Heart right ventricle (tissue), 16 donors: ENCODE measurements at regions of chr11 and their contacts with region 1.

Region 1: GRCh38 chr11:125091247-125091876 is 20.1 kb downstream of the TMEM218 start:
- DNase-seq: peak in 1 of 2 donors; percentile 42
- ATAC-seq: peak; percentile 77 to 93 (median 86)
- H3K4me3 ChIP-seq: no peak overlapping the region
- H3K27ac ChIP-seq: peak overlapping the region in 1 of 10 donors; percentile 49
- H3K4me1 ChIP-seq: peaks cover 0 to 10% (median 5%) of the 10 kb centered on the region in 9 donors
- H3K27me3 ChIP-seq: no peaks in the 10 kb centered on the region
- CTCF ChIP-seq: peak; percentile 46 to 82 (median 70)

Region 2: GRCh38 chr11:125123947-125124617 is 32.7 kb after region 1 on chr11:
- intact Hi-C with region 1: loop called in 1 of 10 experiments (anchors 1 kb)
- DNase-seq: peak; percentile 43 to 49
- ATAC-seq: peak; percentile 55 to 93 (median 80)
- H3K4me3 ChIP-seq: no peak overlapping the region
- H3K27ac ChIP-seq: peak overlapping the region in 2 of 10 donors; percentile 1 to 15
- H3K4me1 ChIP-seq: peaks cover 0 to 14% (median 0%) of the 10 kb centered on the region in 9 donors
- H3K27me3 ChIP-seq: peaks cover 0 to 22% (median 7%) of the 10 kb centered on the region in 7 donors
- CTCF ChIP-seq: peak in 8 of 9 donors; percentile 27 to 63 (median 46)

Region 3: DNA sequence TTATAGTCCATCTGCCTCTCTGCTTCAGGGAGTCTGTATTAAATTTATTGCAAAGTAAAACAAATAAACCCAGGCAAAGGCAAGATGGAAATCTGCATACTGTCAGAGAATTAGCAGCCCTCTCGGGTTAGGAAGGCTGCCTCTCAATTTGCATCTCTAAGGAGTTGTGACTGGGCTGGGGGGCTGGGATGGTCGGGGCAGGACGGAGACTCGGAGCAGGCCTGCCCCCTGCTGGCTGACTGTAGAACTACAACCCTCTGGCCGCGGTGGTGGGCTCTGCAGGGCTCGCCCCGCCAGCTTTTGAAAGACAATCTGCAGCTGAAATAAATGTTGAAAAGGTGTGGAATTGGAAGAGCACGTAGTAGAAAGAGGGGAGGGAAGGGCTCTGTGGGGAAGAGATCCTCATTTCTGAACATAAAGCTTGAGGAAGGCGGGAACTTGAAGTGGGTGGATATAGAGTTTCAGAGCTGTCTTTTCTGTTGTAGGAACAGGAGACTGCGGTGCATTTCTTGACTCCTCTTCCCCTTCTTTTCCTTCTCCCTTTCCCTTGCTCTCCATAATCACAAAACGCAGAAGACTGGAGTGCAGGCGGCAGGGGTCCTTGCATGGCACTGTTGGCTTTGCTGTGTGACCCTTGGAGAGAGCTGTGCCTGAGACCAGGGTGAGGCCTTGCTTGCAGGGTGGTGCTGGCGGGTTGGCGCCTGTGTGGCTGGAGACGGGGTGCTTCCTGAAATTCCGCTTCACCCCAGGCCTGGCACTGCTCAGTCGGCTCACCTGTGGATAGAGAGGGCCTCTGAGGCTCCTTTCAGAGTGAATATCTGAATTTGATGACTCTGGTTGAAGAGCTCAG is 50.5 kb after region 1 on chr11:
- intact Hi-C with region 1: loop called in 4 of 10 experiments (anchors 2 to 10 kb)
- DNase-seq: peak; percentile 15 to 52
- ATAC-seq: peak; percentile 71 to 82 (median 76)
- H3K4me3 ChIP-seq: no peak overlapping the region
- H3K27ac ChIP-seq: no peak overlapping the region
- H3K4me1 ChIP-seq: peaks cover 0 to 8% (median 0%) of the 10 kb centered on the region in 9 donors
- H3K27me3 ChIP-seq: peaks cover 0 to 35% (median 23%) of the 10 kb centered on the region in 7 donors
- CTCF ChIP-seq: peak; percentile 83 to 98 (median 94)

Region 4: DNA sequence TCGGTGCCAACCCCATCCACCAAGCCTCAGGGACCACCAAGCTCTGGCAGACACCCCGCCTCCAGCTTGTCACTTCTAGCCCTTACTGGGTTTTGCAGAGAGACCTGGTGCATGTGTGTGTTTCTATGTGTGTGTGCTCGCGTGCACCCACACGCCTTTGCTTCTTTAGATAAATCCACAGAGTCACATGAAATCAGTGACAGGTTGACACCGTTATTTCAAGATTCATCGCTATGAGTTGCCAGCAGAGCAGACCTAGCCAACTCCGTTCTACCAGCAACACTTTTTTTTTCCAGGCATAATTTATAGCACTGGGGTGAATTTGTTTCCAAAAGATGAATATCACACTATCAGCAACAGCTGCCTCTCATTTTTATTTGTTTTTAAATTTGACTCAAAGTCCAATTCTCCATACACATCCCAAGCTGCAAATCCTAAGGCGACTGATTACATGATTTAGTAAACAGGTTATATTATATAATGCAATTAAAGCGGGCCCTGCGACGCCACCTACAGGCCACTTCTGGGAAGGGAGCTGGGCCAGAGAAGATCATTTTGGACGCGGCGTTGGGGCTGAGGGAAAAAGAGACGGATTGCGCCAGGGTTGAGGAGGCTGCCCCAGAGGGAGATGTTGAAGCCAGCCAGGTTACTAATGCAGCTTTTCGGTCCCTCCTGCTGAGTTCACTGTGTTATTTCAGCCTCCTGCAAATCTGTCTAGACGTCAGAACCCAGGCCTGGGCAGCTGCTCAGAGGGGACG is 254.2 kb after region 1 on chr11:
- intact Hi-C with region 1: loop called in 6 of 10 experiments (anchors 5 to 10 kb)
- DNase-seq: peak; percentile 81 to 85
- ATAC-seq: peak; percentile 76 to 88 (median 82)
- H3K4me3 ChIP-seq: no peak overlapping the region
- H3K27ac ChIP-seq: peak overlapping the region in 9 of 10 donors; percentile 31 to 81 (median 64)
- H3K4me1 ChIP-seq: peaks cover 3 to 43% (median 23%) of the 10 kb centered on the region in 9 donors
- H3K27me3 ChIP-seq: no peaks in the 10 kb centered on the region
- CTCF ChIP-seq: peak; percentile 75 to 93 (median 88)

Region 5: GRCh38 chr11:125351033-125351867 is 259.9 kb after region 1 on chr11:
- intact Hi-C with region 1: loop called in 6 of 10 experiments (anchors 5 to 10 kb)
- DNase-seq: no peak
- ATAC-seq: no peak
- H3K4me3 ChIP-seq: no peak overlapping the region
- H3K27ac ChIP-seq: no peak overlapping the region
- H3K4me1 ChIP-seq: peaks cover 0 to 18% (median 12%) of the 10 kb centered on the region in 9 donors
- H3K27me3 ChIP-seq: peaks cover 0 to 2% (median 0%) of the 10 kb centered on the region in 7 donors
- CTCF ChIP-seq: no peak

Region 6: GRCh38 chr11:125358254-125358840 is 267.0 kb after region 1 on chr11:
- intact Hi-C with region 1: loop called in 2 of 10 experiments (anchors 5 to 10 kb)
- DNase-seq: no peak
- ATAC-seq: no peak
- H3K4me3 ChIP-seq: no peak overlapping the region
- H3K27ac ChIP-seq: no peak overlapping the region
- H3K4me1 ChIP-seq: no peaks in the 10 kb centered on the region
- H3K27me3 ChIP-seq: no peaks in the 10 kb centered on the region
- CTCF ChIP-seq: no peak

Region 7: GRCh38 chr11:125429166-125429707 is 337.9 kb after region 1 on chr11:
- intact Hi-C with region 1: loop called in 4 of 10 experiments (anchors 5 to 10 kb)
- DNase-seq: peak; percentile 53 to 64
- ATAC-seq: peak in 1 of 8 donors; percentile 57
- H3K4me3 ChIP-seq: no peak overlapping the region
- H3K27ac ChIP-seq: no peak overlapping the region
- H3K4me1 ChIP-seq: peaks cover 0 to 44% (median 16%) of the 10 kb centered on the region in 9 donors
- H3K27me3 ChIP-seq: no peaks in the 10 kb centered on the region
- CTCF ChIP-seq: peak; percentile 39 to 74 (median 65)